Activated CD4-positive, alpha-beta memory T cell treated with anti-CD3 and anti-CD28 coated beads for 36 hours (primary cell): ENCODE measurements at regions of chr1 and their contacts with region 1.

Region 1: DNA sequence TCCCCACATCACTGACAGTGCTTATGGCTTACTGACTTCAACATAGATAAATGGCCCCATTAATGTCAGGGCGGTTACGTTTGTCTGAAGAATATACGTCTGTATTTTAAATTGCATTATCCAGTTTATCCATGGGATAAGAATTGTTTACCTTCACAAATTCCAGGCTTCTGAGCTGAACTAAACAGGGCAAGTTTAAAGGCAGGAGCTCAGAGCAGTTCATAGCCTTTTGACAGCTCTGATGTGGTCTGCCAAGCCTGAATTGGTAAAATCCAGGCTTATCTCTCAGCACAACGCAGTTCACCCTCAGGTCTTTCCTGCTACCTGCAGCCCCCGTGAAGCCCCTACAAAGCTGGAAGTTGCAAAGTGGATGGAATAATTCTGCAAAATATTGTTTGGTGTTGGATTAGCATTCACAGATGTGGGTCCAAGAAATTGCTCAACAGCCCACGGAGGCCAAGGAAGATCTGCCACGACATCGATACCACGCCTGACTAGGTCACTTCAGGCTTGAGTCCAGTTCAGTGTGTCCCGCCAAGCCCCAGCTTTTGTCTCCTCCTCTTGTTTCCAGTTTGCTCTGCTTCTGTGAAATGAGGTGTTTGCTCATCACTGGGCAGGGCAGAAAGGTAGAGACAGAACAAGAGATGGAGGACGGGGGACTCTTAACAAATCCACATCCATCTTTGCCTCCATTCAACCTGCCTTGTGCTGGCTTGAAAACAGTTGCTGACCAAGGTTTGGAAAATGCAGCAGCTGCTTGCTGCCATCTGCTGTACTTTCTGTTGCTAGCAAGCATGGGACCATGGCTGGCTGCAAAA is 79.8 kb upstream of the GREM2 start:
- DNase-seq: peak; percentile 24
- H3K4me3 Mint-ChIP-seq: no peak overlapping the region
- H3K27ac Mint-ChIP-seq: no peak overlapping the region
- H3K4me1 Mint-ChIP-seq: peaks cover 13% of the 10 kb centered on the region
- H3K27me3 Mint-ChIP-seq: peaks cover 1% of the 10 kb centered on the region

Region 2: GRCh38 chr1:240455228-240455821 is 236.4 kb before region 1 on chr1:
- CTCF ChIA-PET with region 1: interaction called, 18 read pairs
- POLR2A ChIA-PET with region 1: no interaction called
- intact Hi-C with region 1: loop called (anchors 2 kb)
- DNase-seq: no peak
- H3K4me3 Mint-ChIP-seq: no peak overlapping the region
- H3K27ac Mint-ChIP-seq: no peak overlapping the region
- H3K4me1 Mint-ChIP-seq: no peaks in the 10 kb centered on the region
- H3K27me3 Mint-ChIP-seq: no peaks in the 10 kb centered on the region

Region 3: DNA sequence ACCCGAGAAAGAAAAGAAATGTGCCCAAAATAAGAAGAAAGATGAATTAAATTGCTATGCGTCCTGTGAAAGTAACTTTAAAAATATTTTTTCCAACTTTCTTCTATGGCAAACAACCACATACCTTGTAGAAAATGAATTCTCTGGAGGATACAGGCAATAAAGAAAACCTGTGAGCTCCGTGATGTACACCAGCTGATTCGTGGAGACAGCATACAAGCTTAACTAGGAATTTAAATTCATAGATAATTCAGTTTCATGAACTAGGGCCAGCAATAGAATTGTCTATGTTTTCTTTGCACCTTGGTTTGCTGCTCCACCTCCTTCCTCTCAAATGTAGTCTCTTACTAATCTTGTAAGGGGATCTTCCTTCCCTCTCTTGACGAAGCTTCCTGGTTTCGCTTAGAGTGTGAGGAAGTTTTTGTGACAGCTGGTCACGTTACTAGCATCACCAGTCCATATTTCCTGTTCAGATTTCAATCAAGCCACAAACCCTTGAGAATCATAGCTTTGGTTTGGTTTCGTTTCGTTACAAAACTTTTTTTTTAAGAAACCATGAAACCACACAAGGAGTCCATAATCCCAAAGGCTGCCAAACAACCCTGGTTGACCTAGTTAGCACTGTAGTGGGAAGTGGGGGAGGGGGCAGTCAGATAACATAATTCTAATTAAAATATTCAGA is 115.6 kb before region 1 on chr1:
- CTCF ChIA-PET with region 1: no interaction called
- POLR2A ChIA-PET with region 1: no interaction called
- intact Hi-C with region 1: loop called (anchors 1 kb)
- DNase-seq: peak; percentile 13
- H3K4me3 Mint-ChIP-seq: no peak overlapping the region
- H3K27ac Mint-ChIP-seq: no peak overlapping the region
- H3K4me1 Mint-ChIP-seq: peaks cover 16% of the 10 kb centered on the region
- H3K27me3 Mint-ChIP-seq: no peaks in the 10 kb centered on the region